Head of caudate nucleus (tissue), 42 donors: ENCODE measurements at regions of chr2 and their contacts with region 1.

Region 1: DNA sequence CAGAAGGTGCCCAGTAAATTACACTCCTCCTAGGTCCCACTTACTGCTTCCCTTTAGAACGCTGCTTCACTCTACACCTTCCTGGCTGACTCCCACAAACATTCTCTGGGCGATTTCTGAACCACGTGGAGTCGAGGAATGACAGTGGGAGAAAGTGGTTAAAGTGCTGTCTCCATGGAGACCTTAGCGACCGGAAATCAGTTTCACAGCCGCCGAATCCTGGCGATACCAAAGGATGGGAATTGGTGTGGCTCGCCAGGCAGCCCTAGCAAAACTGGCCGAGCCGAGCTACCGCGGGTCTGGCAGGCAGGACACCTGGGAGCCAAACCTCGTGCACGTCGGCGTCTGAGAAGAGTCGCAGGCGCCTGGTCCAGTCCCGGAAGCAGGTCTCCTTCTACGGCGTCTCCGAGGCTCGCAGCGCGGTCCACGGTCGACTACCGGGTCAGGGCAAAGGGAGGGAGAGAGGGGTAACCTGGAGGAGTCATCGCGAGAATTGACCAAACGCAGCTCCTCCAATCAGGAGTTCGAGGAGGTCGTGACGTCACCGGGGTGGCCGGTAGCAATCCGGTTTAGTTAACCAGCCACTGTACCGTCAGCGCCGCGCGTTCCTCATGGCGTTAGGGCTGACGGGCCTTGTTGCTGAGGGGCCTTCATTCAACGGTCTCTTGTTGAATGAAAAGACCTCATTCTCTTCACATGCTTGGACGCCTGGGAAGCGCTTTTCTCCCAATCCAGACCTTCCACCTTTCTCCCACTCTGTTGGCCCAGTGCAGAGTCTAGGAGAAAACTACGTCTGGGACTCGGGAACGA is at the start of gene THADA:
- DNase-seq: peak; percentile 98 to 100 (median 99)

Region 2: DNA sequence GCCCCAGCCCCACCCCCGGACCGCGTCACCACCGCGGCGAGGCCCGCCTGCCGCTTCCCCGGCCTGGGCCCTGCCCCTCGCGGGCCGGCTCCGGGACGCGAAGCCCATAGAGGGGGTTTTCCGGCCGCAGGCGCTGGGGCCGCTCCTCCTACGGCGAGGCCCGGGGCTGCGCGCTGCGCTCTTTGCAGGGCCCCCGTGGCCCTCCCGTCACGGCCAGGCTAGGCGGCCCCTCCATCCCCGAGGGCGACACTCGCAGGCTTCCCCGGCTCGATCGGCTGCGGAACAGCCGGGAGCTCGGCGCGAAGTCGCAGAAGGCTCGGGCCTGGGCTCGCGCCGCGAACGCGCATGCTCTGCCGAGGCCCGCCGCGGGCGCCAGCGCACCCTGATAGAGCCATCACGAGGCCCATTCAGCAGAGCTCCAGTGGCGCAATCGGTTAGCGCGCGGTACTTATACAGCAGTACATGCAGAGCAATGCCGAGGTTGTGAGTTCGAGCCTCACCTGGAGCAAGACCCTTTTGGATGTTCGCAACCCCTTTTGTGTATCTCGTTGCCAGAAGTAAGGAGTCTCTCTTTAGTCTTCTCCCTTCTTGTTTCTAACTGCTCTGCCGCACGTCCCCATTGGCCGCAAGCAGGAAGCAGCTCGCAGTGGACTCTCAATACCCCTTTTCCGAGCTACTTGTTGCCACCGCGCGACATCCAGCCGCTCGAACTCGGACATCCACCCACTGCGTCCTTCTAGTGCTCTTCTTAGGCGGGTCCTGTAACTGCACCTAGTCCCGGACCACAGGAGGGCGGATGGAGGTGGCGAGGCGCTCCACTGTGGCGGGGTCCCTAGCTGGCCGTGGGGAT is 785.5 kb before region 1 on chr2:
- intact Hi-C with region 1: loop called (anchors 10 kb)
- DNase-seq: peak; percentile 87 to 98 (median 94)